Adrenal gland (tissue), 19 donors: ENCODE measurements at regions of chr12 and their contacts with region 1.

Region 1: GRCh38 chr12:6451348-6452244 is at the start of gene TAPBPL:
- DNase-seq: peak; percentile 84 to 95 (median 90)
- H3K4me3 ChIP-seq: peak within 1 kb of the TSS; percentile 59 to 88 (median 84)
- H3K27ac ChIP-seq: peak within 1 kb of the TSS; percentile 92 to 98 (median 95)
- H3K4me1 ChIP-seq: peaks cover 21 to 23% of the 10 kb centered on the region in 2 donors
- H3K27me3 ChIP-seq: no peaks in the 10 kb centered on the region
- CTCF ChIP-seq: no peak
- POLR2A ChIP-seq: peak; percentile 49 to 75
- total RNA-seq, gene TAPBPL: 17.0 to 42.4 (median 33.8) TPM

Region 2: DNA sequence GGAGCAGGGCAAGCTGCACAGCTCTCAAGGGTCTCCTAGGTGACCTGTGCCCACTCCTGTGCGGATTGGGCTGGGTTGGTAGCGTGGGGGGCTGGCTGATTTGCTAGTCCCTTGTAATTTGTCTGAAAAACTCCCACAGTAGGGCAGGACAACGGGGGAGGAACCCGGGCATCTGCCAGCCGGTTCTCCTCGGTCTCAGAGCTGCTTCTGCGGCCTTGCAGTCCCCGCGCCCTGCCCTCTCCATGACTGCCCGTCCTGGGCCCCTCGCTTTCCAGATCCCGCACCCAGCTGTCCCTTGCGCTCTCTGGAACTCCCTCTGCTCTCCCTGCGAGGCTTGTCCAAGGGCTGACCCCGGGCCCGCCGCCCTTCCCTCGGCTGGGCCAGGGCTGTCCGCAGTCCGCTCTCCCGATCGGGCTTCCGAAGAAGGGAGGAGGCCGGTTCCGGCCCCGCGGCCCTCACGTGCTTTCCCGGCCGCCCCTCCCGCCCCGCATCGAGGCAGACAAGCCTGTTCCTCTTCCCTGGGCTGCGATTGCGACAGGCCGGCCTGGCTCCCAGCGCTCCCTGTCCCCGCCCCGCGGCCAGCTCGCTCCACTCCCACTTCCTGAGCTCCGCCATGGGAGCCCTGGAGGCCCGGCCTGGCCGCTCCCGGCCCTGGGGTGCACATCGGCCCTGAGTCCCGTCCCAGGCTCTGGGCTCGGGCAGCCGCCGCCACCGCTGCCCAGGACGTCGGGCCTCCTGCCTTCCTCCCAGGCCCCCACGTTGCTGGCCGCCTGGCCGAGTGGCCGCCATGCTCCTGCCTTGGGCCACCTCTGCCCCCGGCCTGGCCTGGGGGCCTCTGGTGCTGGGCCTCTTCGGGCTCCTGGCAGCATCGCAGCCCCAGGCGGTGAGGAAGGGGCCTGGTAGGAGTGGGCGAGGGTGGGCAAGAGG is 67.8 kb before region 1 on chr12 and contains the start of gene LTBR:
- intact Hi-C with region 1: loop called in 1 of 2 experiments (anchors 5 kb)
- DNase-seq: peak; percentile 95 to 98 (median 98)
- H3K4me3 ChIP-seq: peak within 1 kb of the TSS; percentile 31 to 88 (median 62)
- H3K27ac ChIP-seq: peak within 1 kb of the TSS; percentile 83 to 97 (median 95)
- H3K4me1 ChIP-seq: peaks cover 19 to 41% of the 10 kb centered on the region in 2 donors
- H3K27me3 ChIP-seq: no peaks in the 10 kb centered on the region
- CTCF ChIP-seq: peak in 1 of 6 experiments; percentile 17
- POLR2A ChIP-seq: peak; percentile 68 to 77
- total RNA-seq, gene LTBR: 34.6 to 295 (median 158) TPM

Region 3: GRCh38 chr12:6430124-6430989 is 21.2 kb before region 1 on chr12:
- intact Hi-C with region 1: no loop called
- DNase-seq: peak; percentile 82 to 98 (median 95)
- H3K4me3 ChIP-seq: peak overlapping the region in 1 of 4 donors; percentile 37
- H3K27ac ChIP-seq: peak overlapping the region; percentile 17 to 95 (median 66)
- H3K4me1 ChIP-seq: peaks cover 0 to 19% of the 10 kb centered on the region in 2 donors
- H3K27me3 ChIP-seq: no peaks in the 10 kb centered on the region
- CTCF ChIP-seq: peak in 2 of 6 experiments; percentile 20 to 30
- POLR2A ChIP-seq: peak in 1 of 2 donors; percentile 44